CD8-positive, alpha-beta T cell (primary cell): ENCODE measurements at regions of chr17 and their contacts with region 1.

Region 1: DNA sequence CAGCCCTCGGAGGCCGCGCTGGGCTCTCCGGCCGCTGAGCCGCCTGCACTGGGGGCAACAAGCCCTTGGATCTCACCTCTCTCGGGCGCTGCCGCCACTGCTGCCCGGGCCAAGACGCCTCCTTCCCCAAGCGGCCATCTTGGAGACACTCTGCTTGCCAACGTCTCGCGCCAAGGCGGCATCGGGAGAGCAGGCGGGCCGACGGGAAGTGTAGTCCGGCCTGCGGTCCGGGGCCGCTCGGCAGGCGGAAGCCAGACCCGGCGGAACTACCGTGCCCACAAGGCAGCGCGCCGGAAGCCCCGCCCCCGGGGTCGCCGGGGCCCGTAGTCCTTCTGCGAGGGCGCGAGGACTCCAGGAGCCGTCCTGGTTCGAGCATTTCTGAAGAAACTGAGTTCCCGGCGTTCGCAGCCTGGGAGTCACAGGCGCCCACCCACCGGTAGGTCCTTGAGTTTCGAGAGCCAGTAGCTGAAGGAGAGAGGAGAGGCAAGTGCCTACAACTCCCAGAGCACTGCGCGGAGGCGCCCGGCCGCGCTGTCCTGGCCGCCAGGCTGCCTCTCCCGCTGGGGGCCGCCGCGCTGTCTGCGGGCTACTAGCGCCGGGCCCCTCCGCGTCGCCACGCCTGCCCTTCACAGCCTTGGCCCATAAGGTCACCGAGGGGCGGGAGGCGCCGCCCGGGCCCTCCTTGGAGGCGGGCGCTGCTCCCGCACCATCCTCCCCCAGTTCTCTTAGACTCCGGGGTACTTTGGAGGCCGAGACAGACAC is at the start of gene TMEM11:
- DNase-seq: peak; percentile 89 to 97 (median 94)
- ATAC-seq: peak; percentile 92
- H3K4me3 ChIP-seq: peak within 1 kb of the TSS; percentile 87 to 100
- H3K4me3 Mint-ChIP-seq: peak within 1 kb of the TSS; percentile 94
- H3K27ac ChIP-seq: peak within 1 kb of the TSS; percentile 84 to 95
- H3K27ac Mint-ChIP-seq: peak within 1 kb of the TSS; percentile 93
- H3K4me1 ChIP-seq: peaks cover 38% of the 10 kb centered on the region
- H3K4me1 Mint-ChIP-seq: peaks cover 52% of the 10 kb centered on the region
- H3K27me3 ChIP-seq: no peaks in the 10 kb centered on the region
- H3K27me3 Mint-ChIP-seq: no peaks in the 10 kb centered on the region
- CTCF ChIP-seq: peak; percentile 26
- total RNA-seq, gene TMEM11: 23.4 to 26.2 TPM

Region 2: GRCh38 chr17:21119247-21119918 is 94.8 kb before region 1 on chr17:
- CTCF ChIA-PET with region 1: interaction called, 6 read pairs
- POLR2A ChIA-PET with region 1: interaction called, 3 read pairs
- intact Hi-C with region 1: loop called (anchors 1 to 2 kb)
- DNase-seq: peak; percentile 41 to 87 (median 71)
- ATAC-seq: peak; percentile 91
- H3K4me3 ChIP-seq: no peak overlapping the region
- H3K4me3 Mint-ChIP-seq: no peak overlapping the region
- H3K27ac ChIP-seq: no peak overlapping the region
- H3K27ac Mint-ChIP-seq: no peak overlapping the region
- H3K4me1 ChIP-seq: peaks cover 4% of the 10 kb centered on the region
- H3K4me1 Mint-ChIP-seq: peaks cover 8% of the 10 kb centered on the region
- H3K27me3 ChIP-seq: no peaks in the 10 kb centered on the region
- H3K27me3 Mint-ChIP-seq: peaks cover 3% of the 10 kb centered on the region
- CTCF ChIP-seq: peak; percentile 82

Region 3: GRCh38 chr17:21275579-21276263 is 61.5 kb after region 1 on chr17:
- CTCF ChIA-PET with region 1: interaction called, 12 read pairs
- POLR2A ChIA-PET with region 1: interaction called, 3 read pairs
- intact Hi-C with region 1: loop called in 1 of 2 experiments (anchors 1 kb)
- DNase-seq: peak; percentile 83 to 98 (median 94)
- ATAC-seq: peak; percentile 84
- H3K4me3 ChIP-seq: peak overlapping the region; percentile 60 to 80
- H3K4me3 Mint-ChIP-seq: peak overlapping the region; percentile 87
- H3K27ac ChIP-seq: peak overlapping the region; percentile 57 to 75
- H3K27ac Mint-ChIP-seq: peak overlapping the region; percentile 90
- H3K4me1 ChIP-seq: peaks cover 37% of the 10 kb centered on the region
- H3K4me1 Mint-ChIP-seq: peaks cover 42% of the 10 kb centered on the region
- H3K27me3 ChIP-seq: no peaks in the 10 kb centered on the region
- H3K27me3 Mint-ChIP-seq: no peaks in the 10 kb centered on the region
- CTCF ChIP-seq: no peak

Region 4: GRCh38 chr17:21318439-21318838 is 104.2 kb after region 1 on chr17:
- CTCF ChIA-PET with region 1: no interaction called
- POLR2A ChIA-PET with region 1: no interaction called
- intact Hi-C with region 1: loop called (anchors 1 to 2 kb)
- DNase-seq: no peak
- ATAC-seq: no peak
- H3K4me3 ChIP-seq: no peak overlapping the region
- H3K4me3 Mint-ChIP-seq: no peak overlapping the region
- H3K27ac ChIP-seq: no peak overlapping the region
- H3K27ac Mint-ChIP-seq: no peak overlapping the region
- H3K4me1 ChIP-seq: no peaks in the 10 kb centered on the region
- H3K4me1 Mint-ChIP-seq: peaks cover 5% of the 10 kb centered on the region
- H3K27me3 ChIP-seq: no peaks in the 10 kb centered on the region
- H3K27me3 Mint-ChIP-seq: no peaks in the 10 kb centered on the region
- CTCF ChIP-seq: no peak